Activated CD8-positive, alpha-beta T cell treated with anti-CD3 and anti-CD28 coated beads for 36 hours (primary cell): ENCODE measurements at regions of chr16 and their contacts with region 1.

Region 1: DNA sequence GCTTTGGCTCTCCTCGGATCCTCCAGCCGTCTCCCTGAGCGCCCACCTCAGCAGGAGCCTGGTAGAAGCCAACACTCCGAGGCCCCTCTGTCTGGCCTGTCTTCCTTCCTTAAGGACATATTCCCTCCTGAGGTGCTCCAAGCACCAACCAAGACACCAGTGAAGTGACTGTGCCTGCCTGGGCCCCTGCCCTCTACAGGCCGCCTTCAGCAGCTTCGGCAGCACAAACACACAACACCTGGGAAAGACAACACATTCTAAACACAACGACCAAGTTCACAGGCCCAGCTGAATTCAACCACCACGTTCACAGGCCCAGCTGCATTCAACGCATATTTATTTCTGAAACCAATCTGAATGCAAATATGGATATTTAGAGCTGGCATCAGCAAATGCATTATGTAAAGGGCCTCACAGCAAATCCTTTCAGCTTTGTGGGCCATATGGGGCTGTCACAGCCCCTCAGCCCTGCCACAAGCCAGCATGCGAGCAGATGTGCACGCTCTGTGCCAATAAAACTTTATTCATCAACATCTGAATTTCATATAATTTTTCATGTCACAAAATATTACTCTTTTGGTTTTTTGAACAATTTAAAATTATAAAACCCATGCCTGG is 12.2 kb downstream of the GALNS start:
- DNase-seq: no peak
- ATAC-seq: no peak
- H3K4me3 Mint-ChIP-seq: no peak overlapping the region
- H3K27ac Mint-ChIP-seq: no peak overlapping the region
- H3K4me1 Mint-ChIP-seq: no peaks in the 10 kb centered on the region
- H3K27me3 Mint-ChIP-seq: no peaks in the 10 kb centered on the region
- CTCF ChIP-seq: no peak

Region 2: GRCh38 chr16:88770461-88771293 is 73.9 kb before region 1 on chr16:
- CTCF ChIA-PET with region 1: no interaction called
- POLR2A ChIA-PET with region 1: no interaction called
- intact Hi-C with region 1: no loop called
- DNase-seq: peak; percentile 78
- ATAC-seq: peak; percentile 90
- H3K4me3 Mint-ChIP-seq: peak overlapping the region; percentile 12
- H3K27ac Mint-ChIP-seq: peak overlapping the region; percentile 64
- H3K4me1 Mint-ChIP-seq: peaks cover 33% of the 10 kb centered on the region
- H3K27me3 Mint-ChIP-seq: no peaks in the 10 kb centered on the region
- CTCF ChIP-seq: no peak

Region 3: DNA sequence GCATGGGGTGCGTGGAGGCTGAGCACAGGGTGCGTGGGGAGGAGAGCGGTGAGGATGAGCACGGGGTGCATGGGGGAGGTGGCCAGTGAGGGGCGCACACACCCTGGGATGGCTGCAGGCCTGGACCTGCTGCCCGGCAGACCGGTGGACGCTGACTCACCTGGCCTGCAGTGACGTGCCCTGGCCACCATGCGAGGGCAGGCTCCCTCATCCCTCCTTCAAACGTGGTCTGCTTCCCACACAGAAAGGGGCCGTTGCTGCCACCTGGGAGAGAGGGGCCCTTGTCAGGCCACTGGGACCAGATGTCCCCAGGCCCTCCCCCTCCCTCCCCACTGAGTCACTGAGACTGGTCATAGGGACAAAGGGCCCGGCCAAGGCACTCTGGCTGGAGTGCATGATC is 12.7 kb before region 1 on chr16:
- CTCF ChIA-PET with region 1: no interaction called
- POLR2A ChIA-PET with region 1: no interaction called
- intact Hi-C with region 1: no loop called
- DNase-seq: no peak
- ATAC-seq: peak; percentile 10
- H3K4me3 Mint-ChIP-seq: no peak overlapping the region
- H3K27ac Mint-ChIP-seq: no peak overlapping the region
- H3K4me1 Mint-ChIP-seq: no peaks in the 10 kb centered on the region
- H3K27me3 Mint-ChIP-seq: no peaks in the 10 kb centered on the region
- CTCF ChIP-seq: no peak

Region 4: GRCh38 chr16:88905563-88905962 is 61.0 kb after region 1 on chr16:
- CTCF ChIA-PET with region 1: no interaction called
- POLR2A ChIA-PET with region 1: no interaction called
- intact Hi-C with region 1: loop called (anchors 10 kb)
- DNase-seq: peak; percentile 48
- ATAC-seq: peak; percentile 72
- H3K4me3 Mint-ChIP-seq: no peak overlapping the region
- H3K27ac Mint-ChIP-seq: no peak overlapping the region
- H3K4me1 Mint-ChIP-seq: no peaks in the 10 kb centered on the region
- H3K27me3 Mint-ChIP-seq: no peaks in the 10 kb centered on the region
- CTCF ChIP-seq: no peak